WTC11 (cell line): ENCODE measurements at regions of chr9 and their contacts with region 1.

Region 1: GRCh38 chr9:69190086-69190862 is 16.2 kb downstream of the TJP2 start:
- DNase-seq: no peak
- ATAC-seq: no peak
- H3K4me3 Mint-ChIP-seq: no peak overlapping the region
- H3K27ac Mint-ChIP-seq: 0 out of 2 replicates have a peak overlapping the region, but pooled peaks have one; percentile 34
- H3K4me1 Mint-ChIP-seq: peaks cover 58% of the 10 kb centered on the region
- H3K27me3 Mint-ChIP-seq: no peaks in the 10 kb centered on the region
- CTCF ChIP-seq: no peak

Region 2: GRCh38 chr9:68883224-68883623 is 307.1 kb before region 1 on chr9:
- CTCF ChIA-PET with region 1: no interaction called
- POLR2A ChIA-PET with region 1: no interaction called
- DNase-seq: no peak
- ATAC-seq: no peak
- H3K4me3 Mint-ChIP-seq: no peak overlapping the region
- H3K27ac Mint-ChIP-seq: peak overlapping the region; percentile 67; the same call in 1 of the 2 replicates
- H3K4me1 Mint-ChIP-seq: peaks cover 25% of the 10 kb centered on the region
- H3K27me3 Mint-ChIP-seq: no peaks in the 10 kb centered on the region
- CTCF ChIP-seq: no peak

Region 3: GRCh38 chr9:69056191-69056815 is 134.0 kb before region 1 on chr9:
- CTCF ChIA-PET with region 1: interaction called, 32 read pairs
- POLR2A ChIA-PET with region 1: no interaction called
- DNase-seq: no peak
- ATAC-seq: no peak
- H3K4me3 Mint-ChIP-seq: no peak overlapping the region
- H3K27ac Mint-ChIP-seq: peak overlapping the region; percentile 92; the same call in 1 of the 2 replicates
- H3K4me1 Mint-ChIP-seq: peaks cover 17% of the 10 kb centered on the region
- H3K27me3 Mint-ChIP-seq: no peaks in the 10 kb centered on the region
- CTCF ChIP-seq: no peak

Region 4: GRCh38 chr9:69155341-69156030 is 34.8 kb before region 1 on chr9:
- CTCF ChIA-PET with region 1: interaction called, 44 read pairs
- POLR2A ChIA-PET with region 1: no interaction called
- DNase-seq: peak; percentile 72
- ATAC-seq: peak; percentile 91
- H3K4me3 Mint-ChIP-seq: no peak overlapping the region
- H3K27ac Mint-ChIP-seq: peak overlapping the region; percentile 96
- H3K4me1 Mint-ChIP-seq: peaks cover 32% of the 10 kb centered on the region
- H3K27me3 Mint-ChIP-seq: no peaks in the 10 kb centered on the region
- CTCF ChIP-seq: no peak

Region 5: DNA sequence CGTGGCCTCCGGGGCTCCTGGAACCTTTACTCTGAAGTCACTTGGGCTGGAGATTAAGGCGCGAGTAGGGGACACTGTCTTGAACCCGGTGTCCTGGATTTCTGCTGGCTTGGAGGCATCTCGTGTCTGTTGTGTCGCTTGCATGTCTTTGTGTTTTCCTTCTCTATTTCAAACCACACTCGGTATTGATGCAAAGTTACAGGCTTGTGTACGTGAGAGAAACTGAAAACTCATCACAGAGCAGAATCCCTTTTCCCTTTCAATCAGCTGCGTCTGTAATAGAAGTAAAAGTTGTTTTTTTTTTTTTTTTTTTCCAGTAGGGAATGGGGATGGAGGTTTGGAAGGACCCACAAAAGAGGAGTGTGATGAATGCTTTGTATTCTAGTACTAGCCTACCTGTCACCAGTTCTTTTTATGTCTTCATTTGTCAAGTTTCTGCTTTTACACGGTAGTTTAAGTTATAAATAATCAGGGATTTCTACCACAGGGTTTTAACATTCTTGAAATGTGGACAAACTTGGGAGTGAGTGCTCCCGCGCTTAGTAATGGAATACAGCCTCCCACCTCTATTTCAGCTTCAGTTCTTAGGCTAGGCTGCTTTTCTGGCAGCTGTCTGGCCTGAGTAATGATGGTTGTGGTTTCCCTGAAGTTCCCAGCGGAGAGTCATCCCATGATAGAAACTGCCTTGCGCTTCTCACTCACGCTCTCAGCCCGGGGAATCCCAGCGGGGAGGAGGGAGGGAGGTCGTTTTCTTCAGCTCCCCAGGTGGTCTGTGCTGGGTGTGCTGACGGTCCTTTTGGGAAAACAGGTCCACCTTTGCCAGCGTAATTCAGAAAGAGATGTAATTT is 15.4 kb before region 1 on chr9:
- CTCF ChIA-PET with region 1: interaction called, 22 read pairs
- POLR2A ChIA-PET with region 1: interaction called, 3 read pairs
- DNase-seq: peak; percentile 63
- ATAC-seq: peak; percentile 44
- H3K4me3 Mint-ChIP-seq: peak overlapping the region; percentile 77
- H3K27ac Mint-ChIP-seq: peak overlapping the region; percentile 75
- H3K4me1 Mint-ChIP-seq: peaks cover 74% of the 10 kb centered on the region
- H3K27me3 Mint-ChIP-seq: peaks cover 6% of the 10 kb centered on the region
- CTCF ChIP-seq: no peak

Region 6: DNA sequence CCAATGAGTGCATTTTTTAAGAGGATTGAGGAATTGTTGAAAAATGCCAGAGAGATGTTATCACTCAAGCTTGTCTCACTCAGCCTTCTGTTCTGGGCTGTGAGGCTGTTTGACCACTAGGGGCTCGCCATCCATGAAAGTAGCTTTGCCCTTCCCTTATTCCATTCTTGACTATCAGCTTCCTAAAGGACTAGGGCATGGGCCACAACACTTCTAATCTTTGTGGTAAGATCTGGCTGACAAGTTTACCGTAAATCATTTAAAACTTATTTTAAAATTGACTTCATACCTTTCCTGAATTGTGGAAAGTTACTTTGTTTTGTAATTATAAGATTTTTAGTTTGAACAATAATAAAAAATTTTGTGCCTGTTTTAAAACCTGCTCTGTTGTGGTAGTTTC is 33.3 kb after region 1 on chr9:
- CTCF ChIA-PET with region 1: interaction called, 13 read pairs
- POLR2A ChIA-PET with region 1: no interaction called
- DNase-seq: peak; percentile 69
- ATAC-seq: peak; percentile 95
- H3K4me3 Mint-ChIP-seq: no peak overlapping the region
- H3K27ac Mint-ChIP-seq: peak overlapping the region; percentile 87
- H3K4me1 Mint-ChIP-seq: peaks cover 36% of the 10 kb centered on the region
- H3K27me3 Mint-ChIP-seq: no peaks in the 10 kb centered on the region
- CTCF ChIP-seq: peak; percentile 59